H1 (cell line): ENCODE measurements at regions of chr19 and their contacts with region 1.

Region 1: GRCh38 chr19:10936661-10937084 is 8.1 kb downstream of the TIMM29 start:
- DNase-seq: no peak
- H3K4me3 ChIP-seq: no peak overlapping the region
- H3K27ac ChIP-seq: no peak overlapping the region
- H3K4me1 ChIP-seq: no peaks in the 10 kb centered on the region; a peak in 1 of 7 replicates
- H3K27me3 ChIP-seq: no peaks in the 10 kb centered on the region
- CTCF ChIP-seq: peak in 2 of 3 experiments; percentile 69 to 72; a peak in 3 of 4 replicates
- EP300 ChIP-seq: no peak
- POLR2A ChIP-seq: peak in 1 of 2 experiments; percentile 56; a peak in 1 of 3 replicates
- RAD21 ChIP-seq: peak; percentile 76 to 78

Region 2: GRCh38 chr19:10820173-10820572 is 116.5 kb before region 1 on chr19:
- CTCF ChIA-PET with region 1: no interaction called
- POLR2A ChIA-PET with region 1: no interaction called
- DNase-seq: no peak
- H3K4me3 ChIP-seq: no peak overlapping the region
- H3K27ac ChIP-seq: no peak overlapping the region
- H3K4me1 ChIP-seq: no peaks in the 10 kb centered on the region; a peak in 1 of 7 replicates
- H3K27me3 ChIP-seq: no peaks in the 10 kb centered on the region
- CTCF ChIP-seq: peak; percentile 45 to 59 (median 59)
- EP300 ChIP-seq: no peak
- POLR2A ChIP-seq: no peak
- RAD21 ChIP-seq: peak; percentile 19 to 39; a peak in 3 of 4 replicates

Region 3: DNA sequence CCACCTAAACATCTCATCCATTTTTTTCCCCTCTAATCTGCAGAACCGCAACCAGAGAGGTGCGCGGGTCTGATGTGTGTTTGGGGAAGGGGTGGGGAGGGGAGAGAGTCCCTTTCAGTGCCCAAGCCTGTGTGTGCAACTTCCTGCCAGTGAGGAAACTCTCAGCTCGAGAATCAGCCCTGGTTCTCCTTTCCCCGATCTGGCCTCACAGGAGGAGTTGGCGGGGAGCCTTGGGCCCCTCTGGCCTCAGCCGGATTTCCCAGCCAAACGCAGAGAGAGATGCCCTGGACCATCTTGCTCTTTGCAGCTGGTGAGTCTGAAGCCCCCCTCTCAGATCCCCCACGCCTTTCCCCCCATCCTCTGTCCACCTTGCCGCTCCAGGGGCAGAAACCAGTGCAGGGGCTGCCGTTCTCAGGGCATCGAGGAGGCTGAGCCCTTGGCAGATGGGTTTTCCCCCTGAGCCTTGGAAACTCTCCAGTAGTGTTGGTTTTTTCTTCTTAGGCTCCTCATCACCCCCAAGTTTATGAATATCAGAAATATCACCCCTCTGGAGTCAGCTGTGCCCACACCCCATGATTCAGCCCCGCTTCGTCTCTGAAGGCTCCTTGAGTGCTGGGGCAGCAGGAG is 88.3 kb before region 1 on chr19 and contains the start of gene C19orf38:
- CTCF ChIA-PET with region 1: no interaction called
- POLR2A ChIA-PET with region 1: no interaction called
- DNase-seq: no peak
- H3K4me3 ChIP-seq: no peak within 1 kb of the TSS
- H3K27ac ChIP-seq: no peak within 1 kb of the TSS
- H3K4me1 ChIP-seq: no peaks in the 10 kb centered on the region
- H3K27me3 ChIP-seq: no peaks in the 10 kb centered on the region
- CTCF ChIP-seq: no peak
- EP300 ChIP-seq: no peak
- POLR2A ChIP-seq: no peak
- RAD21 ChIP-seq: no peak
- total RNA-seq, gene C19orf38: 0.27 TPM in 1 of 2 replicates, not detected in the other

Region 4: GRCh38 chr19:10952809-10953208 is 16.1 kb after region 1 on chr19:
- CTCF ChIA-PET with region 1: interaction called, 110 read pairs
- POLR2A ChIA-PET with region 1: interaction called, 4 read pairs
- DNase-seq: no peak
- H3K4me3 ChIP-seq: no peak overlapping the region
- H3K27ac ChIP-seq: no peak overlapping the region
- H3K4me1 ChIP-seq: no peaks in the 10 kb centered on the region
- H3K27me3 ChIP-seq: no peaks in the 10 kb centered on the region
- CTCF ChIP-seq: no peak
- EP300 ChIP-seq: no peak
- POLR2A ChIP-seq: no peak
- RAD21 ChIP-seq: no peak

Region 5: GRCh38 chr19:10975374-10976130 is 38.9 kb after region 1 on chr19:
- CTCF ChIA-PET with region 1: interaction called, 13 read pairs
- POLR2A ChIA-PET with region 1: interaction called, 3 read pairs
- DNase-seq: no peak
- H3K4me3 ChIP-seq: no peak overlapping the region
- H3K27ac ChIP-seq: no peak overlapping the region
- H3K4me1 ChIP-seq: peaks cover 0 to 3% (median 0%) of the 10 kb centered on the region in 4 experiments; a peak in 3 of 7 replicates
- H3K27me3 ChIP-seq: no peaks in the 10 kb centered on the region
- CTCF ChIP-seq: no peak
- EP300 ChIP-seq: no peak
- POLR2A ChIP-seq: no peak
- RAD21 ChIP-seq: no peak

Region 6: GRCh38 chr19:11011668-11012067 is 75.0 kb after region 1 on chr19:
- CTCF ChIA-PET with region 1: interaction called, 14 read pairs
- POLR2A ChIA-PET with region 1: interaction called, 3 read pairs
- DNase-seq: no peak
- H3K4me3 ChIP-seq: no peak overlapping the region
- H3K27ac ChIP-seq: no peak overlapping the region
- H3K4me1 ChIP-seq: no peaks in the 10 kb centered on the region
- H3K27me3 ChIP-seq: no peaks in the 10 kb centered on the region
- CTCF ChIP-seq: no peak
- EP300 ChIP-seq: no peak
- POLR2A ChIP-seq: no peak
- RAD21 ChIP-seq: 0 out of 4 replicates have a peak, but pooled peaks of 1 of the 2 experiments have one; percentile 3

Region 7: DNA sequence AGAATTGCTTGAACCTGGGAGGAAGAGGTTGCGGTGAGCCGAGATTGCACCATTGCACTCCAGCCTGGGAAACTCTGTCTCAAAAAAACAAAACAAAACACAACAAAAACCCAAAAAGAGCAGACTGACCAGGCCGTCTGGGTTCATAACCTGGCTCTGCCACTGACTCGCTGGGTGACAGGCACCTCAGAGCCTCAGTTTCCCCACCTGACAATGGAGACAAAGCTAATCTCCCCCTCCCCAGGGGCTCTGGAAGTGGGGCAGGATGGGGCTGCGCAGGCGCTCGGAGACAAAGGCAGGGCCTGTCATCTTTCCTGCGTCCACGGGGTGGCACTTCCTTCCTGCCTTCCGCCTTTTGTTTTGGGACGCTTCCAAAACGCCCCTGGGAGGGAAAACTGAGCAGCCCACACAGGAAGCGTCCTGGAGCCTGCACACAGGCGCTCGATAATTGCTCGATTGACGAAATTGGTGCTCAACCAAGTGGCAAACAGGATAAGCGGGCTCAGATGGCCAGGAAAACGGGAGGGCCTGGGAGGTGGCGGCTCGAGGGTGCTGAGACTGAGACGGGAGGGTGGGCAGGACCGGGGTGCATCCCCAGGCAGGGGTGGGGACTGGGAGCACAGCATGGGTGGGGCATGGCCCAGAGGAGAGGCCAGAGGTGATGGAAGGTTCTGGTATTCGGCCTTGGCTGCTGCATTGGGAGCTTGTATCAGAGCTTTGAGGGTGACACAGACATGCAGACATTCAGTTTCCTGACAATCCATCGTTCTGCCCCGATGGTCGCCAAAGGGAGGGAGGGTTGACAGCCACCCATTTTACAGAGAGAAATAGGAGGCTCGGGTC is 201.1 kb after region 1 on chr19:
- CTCF ChIA-PET with region 1: no interaction called
- POLR2A ChIA-PET with region 1: no interaction called
- DNase-seq: peak in 1 of 2 experiments; percentile 79
- H3K4me3 ChIP-seq: peak overlapping the region; percentile 9 to 57 (median 28); a peak in 6 of 8 replicates
- H3K27ac ChIP-seq: no peak overlapping the region
- H3K4me1 ChIP-seq: peaks cover 0 to 17% (median 13%) of the 10 kb centered on the region in 4 experiments; a peak in 6 of 7 replicates
- H3K27me3 ChIP-seq: no peaks in the 10 kb centered on the region
- CTCF ChIP-seq: peak; percentile 62 to 71 (median 69)
- EP300 ChIP-seq: no peak
- POLR2A ChIP-seq: no peak
- RAD21 ChIP-seq: peak; percentile 74 to 76